HEK293T (cell line): ENCODE measurements at regions of chr20 and their contacts with region 1.

Region 1: DNA sequence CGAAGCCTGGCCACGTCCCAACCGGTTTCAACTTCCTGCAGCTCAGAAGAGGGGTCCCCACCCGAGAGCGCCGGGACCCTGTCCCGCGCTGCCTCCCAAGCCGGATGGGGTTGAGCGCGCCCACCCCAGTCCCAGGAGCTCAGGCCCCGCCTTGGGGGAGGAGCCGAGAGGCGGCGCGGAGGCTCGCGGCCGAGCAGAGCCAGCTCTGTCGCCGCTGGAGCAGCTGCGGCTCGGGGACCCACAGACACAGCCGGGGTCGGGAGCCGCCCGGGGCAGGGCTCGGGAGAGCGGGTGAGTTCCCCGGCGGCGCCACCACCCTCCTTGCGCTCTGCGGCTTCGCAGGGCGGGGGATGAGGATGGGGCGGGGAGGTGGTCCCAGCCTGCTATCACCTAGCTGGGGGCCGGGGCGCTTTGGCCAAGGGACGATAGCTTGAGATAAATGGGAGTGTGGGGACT is at the start of gene PPP1R16B:
- DNase-seq: peak; percentile 79

Region 2: GRCh38 chr20:38446441-38447209 is 358.9 kb before region 1 on chr20:
- CTCF ChIA-PET with region 1: interaction called, 10 read pairs
- POLR2A ChIA-PET with region 1: no interaction called
- DNase-seq: peak; percentile 90

Region 3: DNA sequence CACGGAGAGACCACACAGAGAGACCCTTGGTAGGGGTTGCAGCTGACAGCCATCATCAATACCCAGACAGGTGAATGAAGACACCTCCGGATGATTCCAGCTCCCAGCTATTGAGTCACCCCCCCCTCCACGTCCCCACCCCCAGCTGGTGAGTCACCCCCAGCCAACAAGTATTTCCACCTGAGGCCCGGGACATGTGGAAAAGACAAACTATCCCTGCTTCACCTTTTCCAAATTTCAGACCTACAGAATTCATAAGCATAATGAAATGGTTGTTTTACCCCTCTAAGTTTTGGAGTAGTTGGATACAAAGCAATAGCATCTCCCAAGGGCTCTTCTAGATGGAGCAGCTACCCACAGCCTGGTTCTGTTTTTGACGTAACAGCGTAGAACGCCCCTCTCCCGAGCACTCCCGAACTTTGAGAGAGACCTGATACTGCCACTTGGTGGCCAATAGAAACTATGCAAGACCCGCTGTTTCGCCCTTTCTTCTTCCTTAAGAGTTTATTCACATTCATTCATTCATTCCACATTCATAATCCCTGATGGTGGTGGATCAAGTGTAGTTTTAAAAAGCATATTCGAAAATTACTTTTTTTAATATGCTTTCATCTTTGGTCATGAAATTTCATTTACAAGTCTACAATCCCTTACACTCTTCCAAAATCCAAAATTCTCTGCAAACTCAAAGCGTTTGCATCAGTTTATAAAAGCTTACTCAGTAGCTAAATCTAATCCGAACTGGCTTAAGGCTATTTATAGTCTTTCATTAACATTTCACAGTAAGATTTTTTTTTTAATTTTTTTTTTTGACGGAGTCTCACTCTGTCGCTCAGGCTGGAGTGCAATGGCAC is 15.1 kb before region 1 on chr20:
- CTCF ChIA-PET with region 1: interaction called, 11 read pairs
- POLR2A ChIA-PET with region 1: no interaction called
- DNase-seq: peak; percentile 73